ENCODE measurements at regions of chr2 and their contacts with region 1.

Region 1: GRCh38 chr2:227471924-227472264 is at the start of gene AGFG1:
- DNase-seq: peak; percentile 96
- total RNA-seq, gene AGFG1: 58.2 TPM

Region 2: DNA sequence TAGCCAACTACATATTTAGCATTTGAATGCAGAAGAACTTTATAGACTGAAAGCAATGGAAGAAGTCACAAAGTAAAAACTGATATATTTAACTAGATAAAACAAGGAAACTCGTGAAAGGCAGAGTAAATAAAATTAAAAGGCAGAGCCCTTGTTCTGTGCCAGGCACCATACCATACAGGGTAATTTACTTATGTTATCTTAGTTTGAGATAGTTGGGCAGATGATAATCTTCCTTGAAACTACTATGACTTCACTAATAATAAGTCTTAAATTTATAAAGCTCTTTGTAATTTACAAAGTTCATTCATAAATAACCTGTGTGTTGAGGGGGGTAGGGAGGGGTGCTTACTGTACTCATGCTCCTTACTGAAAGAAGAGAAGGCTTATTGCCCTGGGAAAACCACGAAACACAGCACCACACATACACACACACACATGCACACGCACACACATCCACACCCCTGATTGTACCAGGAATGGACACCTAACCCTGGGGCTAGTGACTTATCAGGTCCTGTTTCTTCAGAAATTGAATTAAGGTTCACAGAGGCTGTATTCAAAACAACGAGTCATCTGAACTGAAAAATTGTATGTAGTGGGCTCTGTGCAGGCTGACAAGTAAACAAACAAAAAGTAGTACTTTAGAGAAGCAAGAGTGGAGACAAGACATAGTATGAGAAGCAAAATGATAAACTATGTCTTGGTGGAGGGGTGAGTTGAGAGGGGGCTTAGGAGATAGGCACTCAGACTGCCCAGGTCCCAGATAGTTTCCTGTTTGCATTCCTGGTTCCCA is 38.1 kb after region 1 on chr2:
- intact Hi-C with region 1: loop called (anchors 5 kb)
- DNase-seq: no peak

Measured in cardiac septum (tissue), 1 donor.